Mammary epithelial cell (primary cell): ENCODE measurements at regions of chr18 and their contacts with region 1.

Region 1: GRCh38 chr18:22765896-22766295 is 167.2 kb upstream of the RBBP8 start:
- DNase-seq: no peak
- H3K4me3 ChIP-seq: no peak overlapping the region
- H3K27ac ChIP-seq: no peak overlapping the region
- H3K4me1 ChIP-seq: no peaks in the 10 kb centered on the region
- H3K27me3 ChIP-seq: peaks cover 3% of the 10 kb centered on the region
- CTCF ChIP-seq: no peak

Region 2: DNA sequence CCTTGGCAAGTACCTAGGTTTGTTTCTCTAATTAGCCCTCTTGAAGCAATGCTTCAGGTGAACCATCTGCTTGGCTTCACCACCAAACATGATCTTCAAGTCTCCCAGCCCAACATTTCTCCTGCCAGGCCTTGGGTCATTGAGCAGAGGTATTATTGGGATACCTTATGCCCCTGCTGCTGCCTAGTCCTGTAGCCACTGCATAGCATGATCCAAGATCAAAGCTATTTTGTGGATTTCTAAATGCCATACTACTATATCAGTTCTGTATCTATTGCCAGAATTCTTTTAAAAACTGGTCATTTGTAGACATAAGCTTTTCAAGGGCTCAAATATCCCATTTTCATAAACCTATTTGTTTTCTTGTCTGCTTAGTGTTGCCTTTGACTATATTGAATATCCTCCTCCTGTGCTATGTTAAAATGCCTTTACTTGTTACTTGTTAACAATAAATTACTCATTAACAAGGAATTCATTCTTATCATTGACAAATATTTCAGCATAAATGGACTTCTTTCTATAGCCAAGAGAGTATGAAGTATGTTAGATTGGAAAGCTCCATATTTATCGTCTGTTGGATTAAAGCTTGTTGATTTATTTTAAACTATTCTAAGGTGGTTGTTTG is 37.3 kb before region 1 on chr18:
- CTCF ChIA-PET with region 1: no interaction called
- dilution Hi-C with region 1: loop called (anchors 5 kb)
- in situ Hi-C with region 1: no loop called
- intact Hi-C with region 1: no loop called
- DNase-seq: no peak
- H3K4me3 ChIP-seq: no peak overlapping the region
- H3K27ac ChIP-seq: no peak overlapping the region
- H3K4me1 ChIP-seq: no peaks in the 10 kb centered on the region
- H3K27me3 ChIP-seq: peaks cover 3% of the 10 kb centered on the region
- CTCF ChIP-seq: no peak

Region 3: DNA sequence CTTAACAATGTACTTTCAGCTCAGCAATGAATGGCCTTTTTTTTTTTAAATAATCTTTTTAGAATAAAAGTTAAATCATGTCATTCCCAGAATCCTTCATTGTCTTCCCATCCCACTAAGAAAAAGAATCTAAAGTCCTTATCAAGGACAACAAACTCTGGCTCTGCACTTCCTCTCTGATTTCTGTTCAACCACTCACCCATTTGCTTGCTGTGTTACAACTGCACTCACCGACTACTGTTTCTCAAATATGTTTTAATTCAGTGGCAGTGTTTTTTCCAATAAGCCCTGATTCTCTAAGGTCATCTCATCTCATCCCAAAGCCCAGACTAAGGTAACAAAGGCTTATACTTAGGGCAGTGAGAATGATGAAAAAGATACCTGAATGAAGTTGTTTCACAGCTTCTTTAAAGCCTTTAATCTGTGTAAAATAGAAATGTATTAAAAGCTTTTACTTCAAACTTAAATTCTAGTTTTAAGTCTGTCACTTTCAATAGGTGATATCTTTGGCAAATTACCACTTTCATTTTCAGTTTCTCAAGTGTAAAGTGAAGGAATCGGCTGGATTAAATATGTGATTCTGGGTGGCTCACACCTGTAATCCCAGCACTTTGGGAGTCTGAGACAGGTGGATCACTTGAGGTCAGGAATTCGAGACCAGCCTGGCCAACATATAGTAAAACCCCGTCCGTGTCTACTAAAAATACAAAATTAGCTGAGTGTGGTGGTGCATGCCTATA is 254.8 kb after region 1 on chr18:
- CTCF ChIA-PET with region 1: no interaction called
- dilution Hi-C with region 1: no loop called
- in situ Hi-C with region 1: no loop called
- intact Hi-C with region 1: no loop called
- DNase-seq: no peak
- H3K4me3 ChIP-seq: no peak overlapping the region
- H3K27ac ChIP-seq: no peak overlapping the region
- H3K4me1 ChIP-seq: no peaks in the 10 kb centered on the region
- H3K27me3 ChIP-seq: no peaks in the 10 kb centered on the region
- CTCF ChIP-seq: no peak

Region 4: GRCh38 chr18:23038712-23039111 is 272.8 kb after region 1 on chr18:
- CTCF ChIA-PET with region 1: no interaction called
- dilution Hi-C with region 1: no loop called
- in situ Hi-C with region 1: no loop called
- intact Hi-C with region 1: no loop called
- DNase-seq: peak; percentile 77
- H3K4me3 ChIP-seq: no peak overlapping the region
- H3K27ac ChIP-seq: no peak overlapping the region
- H3K4me1 ChIP-seq: peaks cover 7% of the 10 kb centered on the region
- H3K27me3 ChIP-seq: no peaks in the 10 kb centered on the region
- CTCF ChIP-seq: no peak